Activated CD4-positive, alpha-beta T cell treated with anti-CD3 and anti-CD28 coated beads, Interleukin-2, amount 10 ng/mL, durations not matched to agents 24 days and 14 days (primary cell): ENCODE measurements at regions of chr1 and their contacts with region 1.

Region 1: DNA sequence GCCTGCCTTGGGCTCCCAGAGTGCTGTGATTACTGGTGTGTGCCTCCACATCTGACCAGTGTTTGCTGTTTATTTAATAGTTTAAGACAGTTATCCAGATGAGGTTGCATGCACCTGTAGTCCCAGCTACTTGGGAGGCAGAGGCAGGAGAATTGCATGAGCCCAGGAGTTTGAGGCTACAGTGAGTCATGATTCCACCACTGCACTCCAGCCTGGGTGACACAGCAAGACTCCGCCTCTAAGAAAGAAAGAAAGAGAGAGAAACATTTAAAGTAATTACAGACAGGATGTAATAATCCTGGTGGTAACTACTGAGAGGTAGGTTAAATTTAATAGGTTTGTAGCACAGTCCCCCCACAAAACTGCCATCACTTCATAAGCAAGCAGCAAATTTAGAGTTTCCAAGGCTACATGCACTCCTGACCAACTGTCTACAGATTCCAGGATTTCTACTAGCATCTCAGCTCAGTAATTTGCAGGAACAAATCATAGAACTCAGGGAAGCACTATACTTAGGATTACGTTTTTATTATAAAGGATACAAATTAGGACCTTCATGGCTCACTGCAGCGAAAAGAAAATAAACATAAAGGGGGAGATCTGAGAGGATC is 89.6 kb downstream of the PKN2 start:
- DNase-seq: no peak
- H3K4me3 Mint-ChIP-seq: no peak overlapping the region
- H3K27ac Mint-ChIP-seq: peak overlapping the region; percentile 81
- H3K4me1 Mint-ChIP-seq: peaks cover 16% of the 10 kb centered on the region
- H3K27me3 Mint-ChIP-seq: no peaks in the 10 kb centered on the region

Region 2: DNA sequence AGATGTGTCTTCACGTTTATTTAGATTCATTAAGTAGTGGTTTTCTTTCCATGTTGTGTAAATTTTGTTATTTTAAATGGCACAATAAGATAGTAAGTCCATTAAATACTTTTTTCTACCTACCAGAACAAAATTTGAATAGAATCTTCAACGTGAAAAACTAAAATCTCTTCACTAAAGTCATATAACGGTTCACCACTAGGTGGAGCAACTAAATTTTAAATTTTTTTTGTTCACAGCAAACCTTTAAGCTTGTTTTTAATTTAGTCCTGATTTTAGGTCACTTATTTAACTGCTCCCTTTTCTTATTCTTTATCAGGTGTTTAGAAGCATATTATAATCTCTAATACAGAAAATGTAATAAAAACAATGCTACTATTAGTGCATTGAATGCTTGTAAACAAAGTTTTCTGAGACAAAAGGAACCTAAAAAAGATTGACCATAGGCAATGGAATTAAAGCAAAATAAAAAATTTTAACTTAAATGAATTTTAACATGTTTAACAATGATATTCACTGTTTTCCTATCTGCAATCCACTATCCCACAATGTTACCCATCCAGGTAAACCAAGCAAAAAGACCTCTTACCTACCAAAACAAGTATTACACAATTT is 117.9 kb before region 1 on chr1:
- intact Hi-C with region 1: loop called (anchors 10 kb)
- DNase-seq: no peak
- H3K4me3 Mint-ChIP-seq: no peak overlapping the region
- H3K27ac Mint-ChIP-seq: no peak overlapping the region
- H3K4me1 Mint-ChIP-seq: peaks cover 8% of the 10 kb centered on the region
- H3K27me3 Mint-ChIP-seq: peaks cover under 1% of the 10 kb centered on the region